MCF 10A (cell line): ENCODE measurements at regions of chr1 and their contacts with region 1.

Region 1: DNA sequence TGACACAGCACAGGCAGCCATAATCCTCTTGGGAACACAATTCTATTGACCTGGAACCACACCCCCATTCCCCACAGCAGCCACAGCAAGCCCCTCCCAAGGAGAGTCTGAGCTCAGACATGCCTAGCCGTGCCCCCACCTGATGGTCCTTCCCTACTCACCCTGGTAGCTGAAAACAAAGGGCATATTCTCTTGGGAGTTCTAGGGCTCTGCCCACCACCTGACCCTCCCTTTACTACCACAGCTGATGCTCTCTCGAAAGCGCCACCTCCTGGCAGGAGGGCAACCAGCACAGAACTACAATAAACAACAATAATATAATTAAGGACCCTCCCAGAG is 184.8 kb upstream of the COA6 start:
- DNase-seq: peak; percentile 59
- H3K4me3 Mint-ChIP-seq: no peak overlapping the region
- H3K27ac Mint-ChIP-seq: no peak overlapping the region
- H3K4me1 Mint-ChIP-seq: peaks cover 22% of the 10 kb centered on the region
- H3K27me3 Mint-ChIP-seq: no peaks in the 10 kb centered on the region
- CTCF ChIP-seq: peak; percentile 33

Region 2: GRCh38 chr1:234206651-234207284 is 18.3 kb after region 1 on chr1:
- CTCF ChIA-PET with region 1: interaction called, 4 read pairs
- POLR2A ChIA-PET with region 1: interaction called, 8 read pairs
- intact Hi-C with region 1: loop called (anchors 1 kb)
- DNase-seq: peak; percentile 99
- H3K4me3 Mint-ChIP-seq: peak overlapping the region; percentile 34
- H3K27ac Mint-ChIP-seq: no peak overlapping the region
- H3K4me1 Mint-ChIP-seq: peaks cover 20% of the 10 kb centered on the region
- H3K27me3 Mint-ChIP-seq: no peaks in the 10 kb centered on the region
- CTCF ChIP-seq: no peak

Region 3: GRCh38 chr1:234260578-234260977 is 72.2 kb after region 1 on chr1:
- CTCF ChIA-PET with region 1: no interaction called
- POLR2A ChIA-PET with region 1: no interaction called
- intact Hi-C with region 1: loop called (anchors 1 kb)
- DNase-seq: peak; percentile 90
- H3K4me3 Mint-ChIP-seq: no peak overlapping the region
- H3K27ac Mint-ChIP-seq: peak overlapping the region; percentile 21
- H3K4me1 Mint-ChIP-seq: peaks cover 30% of the 10 kb centered on the region
- H3K27me3 Mint-ChIP-seq: no peaks in the 10 kb centered on the region
- CTCF ChIP-seq: no peak